GM12878 (cell line): ENCODE measurements at regions of chr1 and their contacts with region 1.

Region 1: GRCh38 chr1:35715568-35716002 is 3.1 kb downstream of the C1orf216 start:
- DNase-seq: peak; percentile 42
- ATAC-seq: peak; percentile 80
- H3K4me3 ChIP-seq: no peak overlapping the region
- H3K27ac ChIP-seq: no peak overlapping the region
- H3K4me1 ChIP-seq: peaks cover 5% of the 10 kb centered on the region
- H3K27me3 ChIP-seq: no peaks in the 10 kb centered on the region
- CTCF ChIP-seq: peak; percentile 88 to 92 (median 92); a peak in 5 of 6 replicates
- EP300 ChIP-seq: no peak
- POLR2A ChIP-seq: no peak
- RAD21 ChIP-seq: peak; percentile 82

Region 2: GRCh38 chr1:35386959-35387358 is 328.6 kb before region 1 on chr1:
- CTCF ChIA-PET with region 1: no interaction called
- POLR2A ChIA-PET with region 1: no interaction called
- RAD21 ChIA-PET with region 1: no interaction called
- SMC1A ChIA-PET with region 1: no interaction called
- in situ Hi-C with region 1: no loop called
- intact Hi-C with region 1: no loop called
- DNase-seq: no peak
- ATAC-seq: no peak
- H3K4me3 ChIP-seq: no peak overlapping the region
- H3K27ac ChIP-seq: no peak overlapping the region
- H3K4me1 ChIP-seq: no peaks in the 10 kb centered on the region
- H3K27me3 ChIP-seq: no peaks in the 10 kb centered on the region
- CTCF ChIP-seq: no peak
- EP300 ChIP-seq: no peak
- POLR2A ChIP-seq: no peak
- RAD21 ChIP-seq: no peak

Region 3: DNA sequence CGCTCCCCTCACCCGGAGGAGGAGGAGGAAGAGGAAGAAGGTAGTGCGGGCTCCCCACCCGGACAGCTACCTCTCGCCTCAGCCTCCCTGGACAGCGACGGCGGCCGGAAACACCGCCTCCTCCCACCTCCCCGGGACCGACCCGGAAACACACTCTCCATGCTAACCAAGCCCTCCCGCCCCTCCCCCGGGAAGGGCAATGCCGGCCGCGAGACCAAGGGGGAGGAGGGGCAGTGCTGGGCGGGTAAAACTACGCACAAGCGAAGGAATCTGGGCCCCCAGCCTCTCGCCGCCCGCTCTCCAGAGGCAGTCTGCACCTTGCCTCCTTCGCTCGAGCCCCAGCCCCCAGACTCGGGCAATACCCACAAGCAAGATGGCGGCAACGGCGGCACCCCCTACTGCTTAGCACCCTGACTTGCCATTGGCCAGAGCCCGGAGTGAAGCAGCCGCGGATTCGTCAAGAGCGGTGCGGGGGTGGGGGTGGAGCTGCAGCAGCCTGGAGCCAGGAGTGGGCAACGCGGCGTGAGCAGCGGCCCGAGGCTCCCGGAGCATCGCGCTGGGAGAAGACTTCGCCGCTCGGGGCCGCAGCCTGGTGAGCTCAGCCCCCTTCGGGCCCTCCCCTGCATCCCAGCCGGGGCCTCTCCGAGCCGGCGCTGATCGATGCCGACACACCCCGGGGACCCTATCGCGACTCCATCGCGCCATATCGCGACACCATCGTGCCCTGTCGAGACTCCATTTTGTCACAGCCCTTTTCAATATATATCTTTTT is 158.1 kb before region 1 on chr1 and contains the starts of genes KIAA0319L and NCDN:
- CTCF ChIA-PET with region 1: interaction called, 12 read pairs
- POLR2A ChIA-PET with region 1: no interaction called
- RAD21 ChIA-PET with region 1: interaction called, 3 read pairs
- SMC1A ChIA-PET with region 1: no interaction called
- in situ Hi-C with region 1: no loop called
- intact Hi-C with region 1: no loop called
- DNase-seq: peak; percentile 85
- ATAC-seq: peak; percentile 94
- H3K4me3 ChIP-seq: peak within 1 kb of the TSS; percentile 67
- H3K27ac ChIP-seq: peak within 1 kb of the TSS; percentile 97
- H3K4me1 ChIP-seq: peaks cover 10% of the 10 kb centered on the region
- H3K27me3 ChIP-seq: no peaks in the 10 kb centered on the region
- CTCF ChIP-seq: no peak
- EP300 ChIP-seq: no peak
- POLR2A ChIP-seq: peak; percentile 93
- RAD21 ChIP-seq: no peak
- polyA plus RNA-seq, gene KIAA0319L: 2.6 to 5.9 TPM
- polyA plus RNA-seq, gene NCDN: 1.8 to 2.0 TPM

Region 4: GRCh38 chr1:35577071-35577998 is 138.2 kb before region 1 on chr1:
- CTCF ChIA-PET with region 1: interaction called, 41 read pairs
- POLR2A ChIA-PET with region 1: interaction called, 5 read pairs
- RAD21 ChIA-PET with region 1: interaction called, 13 read pairs
- SMC1A ChIA-PET with region 1: interaction called, 5 read pairs
- in situ Hi-C with region 1: no loop called
- intact Hi-C with region 1: no loop called
- DNase-seq: peak; percentile 40
- ATAC-seq: peak; percentile 92
- H3K4me3 ChIP-seq: peak overlapping the region; percentile 57
- H3K27ac ChIP-seq: peak overlapping the region; percentile 13; the same call in 1 of the 2 replicates
- H3K4me1 ChIP-seq: peaks cover 25% of the 10 kb centered on the region
- H3K27me3 ChIP-seq: peaks cover 0 to 2% of the 10 kb centered on the region in 2 experiments; a peak in 2 of 4 replicates
- CTCF ChIP-seq: no peak
- EP300 ChIP-seq: no peak
- POLR2A ChIP-seq: peak; percentile 78
- RAD21 ChIP-seq: no peak

Region 5: GRCh38 chr1:35641233-35641866 is 74.2 kb before region 1 on chr1 and contains the start of gene PSMB2:
- CTCF ChIA-PET with region 1: interaction called, 20 read pairs
- POLR2A ChIA-PET with region 1: interaction called, 3 read pairs
- RAD21 ChIA-PET with region 1: interaction called, 18 read pairs
- SMC1A ChIA-PET with region 1: interaction called, 10 read pairs
- in situ Hi-C with region 1: no loop called
- intact Hi-C with region 1: loop called (anchors 1 kb)
- DNase-seq: peak; percentile 80
- ATAC-seq: peak; percentile 91
- H3K4me3 ChIP-seq: peak within 1 kb of the TSS; percentile 98
- H3K27ac ChIP-seq: peak within 1 kb of the TSS; percentile 82
- H3K4me1 ChIP-seq: no peaks in the 10 kb centered on the region; the same call in 1 of the 2 replicates
- H3K27me3 ChIP-seq: no peaks in the 10 kb centered on the region; a peak in 3 of 4 replicates
- CTCF ChIP-seq: no peak
- EP300 ChIP-seq: no peak
- POLR2A ChIP-seq: peak; percentile 98
- RAD21 ChIP-seq: no peak
- polyA plus RNA-seq, gene PSMB2: 289 to 299 TPM

Region 6: GRCh38 chr1:35753626-35754260 is 38.2 kb after region 1 on chr1:
- CTCF ChIA-PET with region 1: interaction called, 12 read pairs
- POLR2A ChIA-PET with region 1: no interaction called
- RAD21 ChIA-PET with region 1: interaction called, 4 read pairs
- SMC1A ChIA-PET with region 1: no interaction called
- in situ Hi-C with region 1: no loop called
- intact Hi-C with region 1: no loop called
- DNase-seq: no peak
- ATAC-seq: peak; percentile 78
- H3K4me3 ChIP-seq: no peak overlapping the region
- H3K27ac ChIP-seq: no peak overlapping the region
- H3K4me1 ChIP-seq: peaks cover 13% of the 10 kb centered on the region
- H3K27me3 ChIP-seq: no peaks in the 10 kb centered on the region
- CTCF ChIP-seq: no peak
- EP300 ChIP-seq: no peak
- POLR2A ChIP-seq: no peak
- RAD21 ChIP-seq: no peak

Region 7: DNA sequence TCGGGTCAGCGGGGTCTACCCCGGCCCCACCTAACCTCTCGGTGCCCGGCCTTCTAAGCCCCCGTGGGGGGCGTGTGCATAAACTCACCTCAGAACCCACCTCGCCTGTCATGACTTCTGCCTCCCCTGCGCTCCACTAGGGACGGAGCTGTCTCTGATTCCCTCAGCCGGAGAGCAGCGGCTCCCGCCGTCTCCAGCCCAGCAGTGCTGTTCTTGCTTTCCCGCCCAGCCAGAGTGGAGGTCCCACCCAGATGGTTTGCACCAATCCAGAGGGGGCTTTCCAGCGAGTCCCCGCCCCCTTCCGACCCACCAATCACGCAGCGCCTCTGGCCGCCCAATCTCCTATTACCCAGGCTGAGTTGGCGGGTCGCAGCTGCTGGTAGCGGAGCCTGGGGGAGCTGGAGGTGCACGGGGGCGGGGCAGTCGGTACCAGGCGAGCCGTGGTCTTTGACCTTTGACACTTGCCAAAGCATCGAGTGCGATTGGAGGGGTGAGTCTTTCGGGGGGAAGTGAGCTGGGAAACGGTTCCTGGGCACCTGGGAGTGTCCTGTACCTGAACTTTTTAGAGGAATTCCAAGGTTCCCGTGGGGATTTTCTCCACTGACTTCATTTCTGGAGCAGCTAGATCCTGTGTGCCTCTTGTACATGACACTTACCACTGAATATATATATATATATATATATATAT is 54.3 kb after region 1 on chr1 and contains the start of gene CLSPN:
- CTCF ChIA-PET with region 1: interaction called, 61 read pairs
- POLR2A ChIA-PET with region 1: interaction called, 11 read pairs
- RAD21 ChIA-PET with region 1: interaction called, 29 read pairs
- SMC1A ChIA-PET with region 1: interaction called, 19 read pairs
- in situ Hi-C with region 1: no loop called
- intact Hi-C with region 1: loop called (anchors 5 kb)
- DNase-seq: peak; percentile 86
- ATAC-seq: peak; percentile 95
- H3K4me3 ChIP-seq: peak within 1 kb of the TSS; percentile 78
- H3K27ac ChIP-seq: peak within 1 kb of the TSS; percentile 91
- H3K4me1 ChIP-seq: no peaks in the 10 kb centered on the region
- H3K27me3 ChIP-seq: no peaks in the 10 kb centered on the region
- CTCF ChIP-seq: no peak
- EP300 ChIP-seq: no peak
- POLR2A ChIP-seq: peak; percentile 91
- RAD21 ChIP-seq: no peak
- polyA plus RNA-seq, gene CLSPN: 13.9 to 16.6 TPM

Region 8: DNA sequence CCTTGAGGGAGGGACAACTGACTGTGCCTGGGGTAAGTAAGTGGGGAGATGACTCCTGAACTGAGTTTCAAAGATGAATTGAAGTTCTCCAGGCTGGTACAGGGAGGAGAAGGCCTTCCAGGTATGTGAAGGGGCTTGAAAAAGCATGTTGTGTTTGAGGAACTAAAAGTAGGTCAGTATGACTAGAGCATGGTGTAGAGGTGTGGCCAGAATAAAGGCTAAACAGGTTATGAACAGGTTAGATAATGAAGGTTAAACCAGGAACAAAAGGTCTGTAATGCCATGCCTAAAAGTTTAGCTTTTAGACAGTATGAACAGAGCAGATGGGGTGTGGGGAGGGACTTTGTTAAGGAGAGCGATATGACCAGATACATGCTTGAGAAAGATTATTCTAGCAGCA is 61.5 kb after region 1 on chr1:
- CTCF ChIA-PET with region 1: interaction called, 61 read pairs
- POLR2A ChIA-PET with region 1: no interaction called
- RAD21 ChIA-PET with region 1: interaction called, 16 read pairs
- SMC1A ChIA-PET with region 1: interaction called, 19 read pairs
- in situ Hi-C with region 1: no loop called
- intact Hi-C with region 1: loop called (anchors 5 kb)
- DNase-seq: no peak
- ATAC-seq: peak; percentile 52
- H3K4me3 ChIP-seq: no peak overlapping the region
- H3K27ac ChIP-seq: no peak overlapping the region
- H3K4me1 ChIP-seq: peaks cover 9% of the 10 kb centered on the region
- H3K27me3 ChIP-seq: no peaks in the 10 kb centered on the region
- CTCF ChIP-seq: no peak
- EP300 ChIP-seq: no peak
- POLR2A ChIP-seq: no peak
- RAD21 ChIP-seq: no peak